Tibial artery (tissue), 4 donors: ENCODE measurements at regions of chr3 and their contacts with region 1.

Region 1: DNA sequence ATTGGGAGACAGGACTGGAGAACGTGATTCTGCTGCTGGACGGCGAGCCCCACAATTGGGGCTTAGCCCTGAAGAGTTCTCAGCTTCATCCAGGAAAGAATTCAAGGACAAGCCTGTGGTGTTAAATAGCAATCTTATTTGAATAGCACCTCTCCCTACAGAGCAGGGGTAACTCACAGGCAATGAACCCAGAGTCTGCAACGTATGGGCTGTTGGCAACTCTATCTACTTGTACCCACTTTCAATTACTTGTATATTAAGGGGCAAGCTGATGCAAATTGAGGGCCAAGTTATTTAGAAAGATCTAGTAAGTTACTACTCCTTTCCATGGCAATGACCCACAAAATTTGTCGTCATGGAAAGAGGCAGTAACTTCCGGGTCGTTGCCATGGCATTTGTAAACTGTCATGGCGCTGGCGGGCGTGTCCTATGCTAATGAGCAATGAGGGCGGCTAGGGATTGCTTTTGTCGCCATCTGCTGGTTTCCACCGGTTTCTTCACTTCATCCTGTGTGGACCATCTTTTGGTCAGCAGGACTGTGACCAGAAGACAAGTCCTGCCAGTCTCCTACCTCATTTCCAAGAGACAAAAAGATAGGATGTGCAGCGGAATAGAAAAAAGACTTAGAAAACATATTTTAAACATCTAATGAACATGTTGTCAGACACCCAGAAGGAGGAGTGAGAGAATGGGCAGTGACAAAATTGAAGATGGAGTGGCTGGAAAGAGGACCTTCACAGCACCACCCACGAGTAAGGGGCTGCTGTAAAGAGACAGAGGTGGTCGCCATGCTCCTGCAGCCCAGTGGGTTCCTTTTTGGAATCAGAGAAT is 45.8 kb upstream of the SH3BP5 start:
- DNase-seq: peak; percentile 96 to 97
- H3K4me3 ChIP-seq: no peak overlapping the region
- H3K27ac ChIP-seq: peak overlapping the region; percentile 68 to 75
- H3K4me1 ChIP-seq: peaks cover 0 to 4% (median 0%) of the 10 kb centered on the region in 4 donors
- H3K27me3 ChIP-seq: no peaks in the 10 kb centered on the region
- CTCF ChIP-seq: peak; percentile 85 to 96

Region 2: GRCh38 chr3:15032650-15033049 is 345.5 kb before region 1 on chr3:
- intact Hi-C with region 1: no loop called
- DNase-seq: no peak
- H3K4me3 ChIP-seq: no peak overlapping the region
- H3K27ac ChIP-seq: no peak overlapping the region
- H3K4me1 ChIP-seq: no peaks in the 10 kb centered on the region
- H3K27me3 ChIP-seq: no peaks in the 10 kb centered on the region
- CTCF ChIP-seq: no peak

Region 3: DNA sequence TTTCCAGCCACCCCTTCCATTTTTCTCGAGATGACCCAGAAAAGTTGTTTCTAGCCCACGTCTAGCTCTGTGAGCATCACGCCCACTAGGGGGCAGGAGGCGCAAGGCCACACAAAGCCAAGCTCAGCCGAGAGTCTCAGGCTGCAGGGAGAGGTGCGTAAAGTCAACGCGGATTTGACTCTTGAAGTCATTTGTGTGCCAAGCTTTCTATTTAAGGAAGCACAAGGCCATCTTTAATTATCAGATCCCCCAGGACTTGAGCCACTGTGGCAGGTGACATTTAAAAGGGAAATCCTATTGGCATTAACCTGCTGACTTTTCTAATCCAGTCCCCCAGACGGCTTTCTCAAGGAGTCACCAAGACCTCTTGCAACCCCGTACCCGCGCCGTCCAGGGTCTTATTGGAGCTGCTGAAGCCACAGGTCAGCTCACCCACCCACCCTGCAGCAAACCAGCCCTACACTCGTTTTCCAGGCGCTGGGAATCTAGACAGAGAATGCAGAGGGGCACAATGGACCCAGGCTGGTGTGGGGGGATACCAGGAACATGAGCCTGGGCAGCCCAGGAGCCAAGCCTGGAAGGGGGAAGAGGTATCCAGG is 110.0 kb before region 1 on chr3:
- intact Hi-C with region 1: loop called (anchors 5 kb)
- DNase-seq: peak; percentile 90
- H3K4me3 ChIP-seq: no peak overlapping the region
- H3K27ac ChIP-seq: peak overlapping the region; percentile 64 to 66
- H3K4me1 ChIP-seq: peaks cover 0 to 43% (median 21%) of the 10 kb centered on the region in 4 donors
- H3K27me3 ChIP-seq: no peaks in the 10 kb centered on the region
- CTCF ChIP-seq: peak; percentile 91 to 95